ENCODE measurements at regions of chr16 and their contacts with region 1.

Region 1: DNA sequence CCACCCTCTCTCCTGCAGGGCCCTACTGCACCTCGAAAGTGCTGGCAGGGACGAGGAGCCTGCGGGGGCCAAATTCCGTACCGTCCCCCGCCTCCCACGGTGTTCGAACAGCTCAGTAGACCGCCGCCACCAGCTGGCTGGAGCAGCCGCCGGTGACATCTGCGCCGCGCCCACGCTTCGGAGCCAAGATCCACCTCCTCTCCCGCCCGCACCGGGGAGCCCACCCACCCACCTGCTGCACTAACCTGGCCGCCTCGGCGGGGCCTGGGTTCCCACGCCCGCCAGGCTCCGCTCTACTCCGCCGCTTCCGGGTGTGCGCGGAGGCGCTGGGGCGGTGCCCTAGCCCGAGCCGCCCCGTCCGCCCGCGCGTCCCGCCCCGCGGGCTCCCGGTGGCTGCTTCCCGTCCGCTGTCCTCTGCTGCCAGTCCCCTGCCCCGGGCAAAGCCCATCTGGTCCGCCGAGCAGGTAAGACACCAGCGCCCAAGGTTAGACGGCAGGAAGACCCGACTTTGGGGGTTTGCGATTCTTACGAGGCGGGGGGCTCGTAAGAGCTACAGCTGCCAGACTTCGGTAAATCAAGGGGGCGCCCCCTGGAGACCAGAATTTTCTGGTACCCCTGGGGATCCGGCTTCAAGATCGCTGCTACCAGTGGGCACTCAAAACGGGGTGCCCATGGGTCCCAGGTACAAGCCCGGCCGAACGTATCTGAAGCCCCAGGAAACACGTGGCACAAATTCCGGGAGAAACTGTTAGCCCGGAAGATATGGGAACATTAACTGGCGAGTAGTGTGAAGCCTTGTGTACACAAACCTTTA is at the starts of genes FBXL8 and TRADD:
- DNase-seq: peak; percentile 67 to 76
- ATAC-seq: peak; percentile 83 to 89
- H3K4me3 ChIP-seq: peak within 1 kb of the TSS; percentile 94
- H3K27ac ChIP-seq: peak within 1 kb of the TSS; percentile 86 to 90
- H3K4me1 ChIP-seq: peaks cover 21% of the 10 kb centered on the region
- CTCF ChIP-seq: peak; percentile 70
- EP300 ChIP-seq: no peak
- POLR2A ChIP-seq: peak; percentile 64
- RAD21 ChIP-seq: no peak; a peak in 1 of 5 replicates
- polyA plus RNA-seq, gene FBXL8: 5.4 and 5.6 TPM in 2 replicates
- polyA plus RNA-seq, gene TRADD: 7.8 and 9.1 TPM in 2 replicates

Region 2: GRCh38 chr16:66954097-66954659 is 205.6 kb before region 1 on chr16:
- CTCF ChIA-PET with region 1: interaction called, 24 read pairs
- POLR2A ChIA-PET with region 1: interaction called, 4 read pairs
- DNase-seq: peak; percentile 81 to 90
- ATAC-seq: peak; percentile 93 to 96
- H3K4me3 ChIP-seq: no peak overlapping the region
- H3K27ac ChIP-seq: peak overlapping the region; percentile 26 to 38; a peak in 3 of 6 replicates
- H3K4me1 ChIP-seq: peaks cover 8% of the 10 kb centered on the region; the same call in 2 of the 3 replicates
- CTCF ChIP-seq: peak; percentile 89
- EP300 ChIP-seq: no peak
- POLR2A ChIP-seq: no peak
- RAD21 ChIP-seq: peak; percentile 89 to 90

Region 3: GRCh38 chr16:66983033-66983432 is 176.8 kb before region 1 on chr16:
- CTCF ChIA-PET with region 1: interaction called, 190 read pairs
- POLR2A ChIA-PET with region 1: no interaction called
- DNase-seq: no peak
- ATAC-seq: no peak
- H3K4me3 ChIP-seq: no peak overlapping the region
- H3K27ac ChIP-seq: no peak overlapping the region
- H3K4me1 ChIP-seq: peaks cover 4% of the 10 kb centered on the region; the same call in 1 of the 3 replicates
- CTCF ChIP-seq: no peak
- EP300 ChIP-seq: no peak
- POLR2A ChIP-seq: no peak
- RAD21 ChIP-seq: no peak

Region 4: GRCh38 chr16:67006930-67007658 is 152.7 kb before region 1 on chr16:
- CTCF ChIA-PET with region 1: interaction called, 27 read pairs
- POLR2A ChIA-PET with region 1: no interaction called
- DNase-seq: no peak
- ATAC-seq: no peak
- H3K4me3 ChIP-seq: no peak overlapping the region
- H3K27ac ChIP-seq: peak overlapping the region; percentile 38; a peak in 1 of 6 replicates
- H3K4me1 ChIP-seq: peaks cover 9% of the 10 kb centered on the region; the same call in 2 of the 3 replicates
- CTCF ChIP-seq: no peak
- EP300 ChIP-seq: no peak
- POLR2A ChIP-seq: no peak
- RAD21 ChIP-seq: no peak

Region 5: GRCh38 chr16:67043420-67043819 is 116.4 kb before region 1 on chr16:
- CTCF ChIA-PET with region 1: interaction called, 19 read pairs
- POLR2A ChIA-PET with region 1: no interaction called
- DNase-seq: no peak
- ATAC-seq: no peak
- H3K4me3 ChIP-seq: no peak overlapping the region
- H3K27ac ChIP-seq: no peak overlapping the region
- H3K4me1 ChIP-seq: no peaks in the 10 kb centered on the region
- CTCF ChIP-seq: no peak
- EP300 ChIP-seq: no peak
- POLR2A ChIP-seq: no peak
- RAD21 ChIP-seq: no peak

Region 6: GRCh38 chr16:67104061-67104460 is 55.7 kb before region 1 on chr16:
- CTCF ChIA-PET with region 1: interaction called, 18 read pairs
- POLR2A ChIA-PET with region 1: no interaction called
- DNase-seq: peak in 1 of 2 experiments; percentile 54
- ATAC-seq: peak; percentile 75 to 87; a peak in 5 of 6 replicates
- H3K4me3 ChIP-seq: no peak overlapping the region
- H3K27ac ChIP-seq: no peak overlapping the region
- H3K4me1 ChIP-seq: 0 out of 3 replicates have a peak, but pooled peaks cover 2% of the 10 kb centered on the region
- CTCF ChIP-seq: peak; percentile 40
- EP300 ChIP-seq: no peak
- POLR2A ChIP-seq: no peak
- RAD21 ChIP-seq: peak in 1 of 2 experiments; percentile 21; a peak in 1 of 5 replicates

Region 7: GRCh38 chr16:67173808-67174705 is 14.3 kb after region 1 on chr16:
- CTCF ChIA-PET with region 1: interaction called, 314 read pairs
- POLR2A ChIA-PET with region 1: interaction called, 46 read pairs
- DNase-seq: peak; percentile 89 to 91
- ATAC-seq: peak; percentile 59 to 82
- H3K4me3 ChIP-seq: peak overlapping the region; percentile 50
- H3K27ac ChIP-seq: peak overlapping the region; percentile 84 to 87
- H3K4me1 ChIP-seq: peaks cover 45% of the 10 kb centered on the region
- CTCF ChIP-seq: peak; percentile 26; the same call in 1 of the 3 replicates
- EP300 ChIP-seq: no peak
- POLR2A ChIP-seq: peak; percentile 62
- RAD21 ChIP-seq: peak in 1 of 2 experiments; percentile 28; a peak in 2 of 5 replicates

Region 8: GRCh38 chr16:67236563-67237395 is 77.0 kb after region 1 on chr16:
- CTCF ChIA-PET with region 1: no interaction called
- POLR2A ChIA-PET with region 1: no interaction called
- DNase-seq: peak; percentile 75 to 86
- ATAC-seq: peak; percentile 37 to 77
- H3K4me3 ChIP-seq: no peak overlapping the region
- H3K27ac ChIP-seq: no peak overlapping the region; a peak in 1 of 6 replicates
- H3K4me1 ChIP-seq: peaks cover 21% of the 10 kb centered on the region
- CTCF ChIP-seq: no peak
- EP300 ChIP-seq: no peak
- POLR2A ChIP-seq: no peak
- RAD21 ChIP-seq: no peak